ENCODE measurements at regions of chr10 and their contacts with region 1.

Region 1: DNA sequence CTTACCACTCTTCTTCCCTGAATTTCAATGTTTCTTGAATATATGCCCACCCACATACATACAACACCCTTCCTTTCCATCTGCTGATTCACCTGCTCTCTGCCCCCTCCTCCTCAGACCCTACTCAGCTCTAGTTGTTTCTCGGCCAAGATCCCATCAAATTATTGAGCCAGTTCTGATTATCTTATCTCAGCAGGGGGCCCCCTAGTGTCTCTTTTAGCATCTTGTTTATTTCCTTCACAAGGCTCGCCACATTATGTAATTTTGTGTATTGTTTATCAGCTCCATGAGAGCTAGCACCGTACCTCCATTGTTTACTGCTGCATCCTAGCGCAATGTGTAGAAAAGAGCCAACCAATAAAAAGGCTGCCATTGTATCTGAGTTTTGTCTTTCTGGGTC is 71.9 kb downstream of the FAM13C start:
- DNase-seq: no peak
- H3K4me3 ChIP-seq: no peak overlapping the region
- H3K27ac ChIP-seq: no peak overlapping the region
- H3K4me1 ChIP-seq: no peaks in the 10 kb centered on the region
- H3K27me3 ChIP-seq: no peaks in the 10 kb centered on the region
- CTCF ChIP-seq: peak in 2 of 3 experiments; percentile 5 to 29

Region 2: GRCh38 chr10:59405235-59405634 is 114.8 kb after region 1 on chr10:
- dilution Hi-C with region 1: loop called (anchors 10 kb)
- DNase-seq: no peak
- H3K4me3 ChIP-seq: no peak overlapping the region
- H3K27ac ChIP-seq: no peak overlapping the region
- H3K4me1 ChIP-seq: no peaks in the 10 kb centered on the region
- H3K27me3 ChIP-seq: no peaks in the 10 kb centered on the region
- CTCF ChIP-seq: no peak

Region 3: DNA sequence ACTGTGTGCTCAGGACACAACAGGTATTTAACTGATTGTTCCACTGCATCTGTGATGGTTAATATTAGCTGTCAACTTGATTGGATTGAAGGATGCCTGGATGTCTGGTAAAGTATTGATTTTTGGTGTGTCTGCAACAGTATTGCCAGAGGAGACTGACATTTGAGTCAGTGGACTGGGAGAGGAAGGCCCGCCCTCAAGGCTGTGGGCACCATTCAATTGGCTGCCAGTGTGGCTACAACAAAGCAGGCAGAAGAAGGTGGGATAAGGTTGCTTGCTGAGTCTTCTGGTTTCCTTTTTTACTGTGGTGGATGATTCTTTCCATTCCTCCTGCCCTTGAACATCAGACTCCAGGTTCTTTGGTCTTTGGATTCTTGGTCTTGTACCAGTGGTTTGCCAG is 209.0 kb after region 1 on chr10:
- dilution Hi-C with region 1: no loop called
- DNase-seq: no peak
- H3K4me3 ChIP-seq: no peak overlapping the region
- H3K27ac ChIP-seq: no peak overlapping the region
- H3K4me1 ChIP-seq: no peaks in the 10 kb centered on the region
- H3K27me3 ChIP-seq: no peaks in the 10 kb centered on the region
- CTCF ChIP-seq: no peak

Measured in keratinocyte (primary cell).